ENCODE measurements at regions of chr5 and their contacts with region 1.

Region 1: DNA sequence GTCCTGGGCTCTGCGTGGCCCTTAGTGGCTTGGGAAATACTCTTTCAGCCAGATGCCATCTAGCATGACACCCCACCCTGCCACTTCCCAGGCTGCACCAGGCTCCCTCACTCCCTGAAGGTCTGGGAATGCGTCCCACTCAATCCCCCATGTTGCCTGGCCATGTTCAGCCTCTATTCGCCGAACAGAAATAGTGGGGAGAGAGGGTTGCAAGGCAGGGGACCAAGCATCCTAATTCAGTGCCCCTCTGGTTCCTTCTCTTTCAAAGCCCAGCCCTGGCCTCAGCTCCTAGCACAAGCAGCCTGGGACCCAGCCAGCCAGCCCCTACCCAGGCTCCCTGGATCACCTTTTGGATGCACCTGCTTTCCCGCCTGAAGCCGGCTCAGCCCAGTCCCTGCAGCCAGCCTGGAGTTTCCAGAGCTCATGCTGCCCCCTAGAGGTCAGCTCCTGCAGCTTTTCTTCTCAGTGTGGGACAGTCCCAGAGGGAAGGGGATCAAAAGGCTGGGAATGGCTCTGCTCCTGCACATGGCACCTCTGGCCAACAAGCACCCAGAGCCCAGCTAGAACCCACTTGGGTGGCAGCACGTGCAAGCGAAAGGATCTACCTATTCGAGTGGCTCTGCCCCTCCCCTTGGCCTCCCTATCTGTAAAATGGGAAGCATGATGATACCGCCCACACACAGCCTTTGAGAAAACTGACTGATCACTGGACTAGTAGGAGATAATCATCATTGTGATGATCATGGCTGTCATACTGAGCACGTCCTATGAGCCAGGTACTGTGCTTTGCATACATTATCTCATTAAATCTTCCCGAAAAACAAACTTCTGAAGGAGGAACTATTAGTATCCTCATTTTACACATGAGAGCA is 48.7 kb upstream of the C5orf58 start:
- H3K4me3 ChIP-seq: no peak overlapping the region
- H3K27ac ChIP-seq: no peak overlapping the region
- H3K4me1 ChIP-seq: no peaks in the 10 kb centered on the region
- CTCF ChIP-seq: peak; percentile 39

Region 2: GRCh38 chr5:170100066-170100943 is 83.7 kb before region 1 on chr5:
- CTCF ChIA-PET with region 1: interaction called, 169 read pairs
- POLR2A ChIA-PET with region 1: no interaction called
- H3K4me3 ChIP-seq: no peak overlapping the region
- H3K27ac ChIP-seq: no peak overlapping the region
- H3K4me1 ChIP-seq: no peaks in the 10 kb centered on the region
- CTCF ChIP-seq: peak; percentile 62

Region 3: DNA sequence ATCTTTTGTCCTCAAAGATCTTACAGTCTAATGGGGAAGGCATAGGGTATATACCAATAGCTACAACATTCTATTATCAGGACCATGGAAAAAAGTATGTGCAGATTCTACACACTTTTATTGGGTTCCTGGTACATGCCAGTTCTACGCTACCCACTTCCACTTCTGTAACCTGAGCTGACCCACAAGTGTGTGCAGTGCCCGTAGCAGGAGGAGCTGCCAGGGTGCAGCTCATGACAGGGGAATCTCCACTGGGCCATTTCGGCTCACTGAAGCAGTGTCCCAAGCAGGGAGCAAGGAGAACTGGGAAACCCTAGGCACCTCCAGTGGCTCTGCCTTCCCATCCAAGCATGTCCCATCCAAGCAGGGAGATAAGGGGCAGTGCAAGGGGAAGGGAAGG is 18.0 kb before region 1 on chr5:
- CTCF ChIA-PET with region 1: interaction called, 12 read pairs
- POLR2A ChIA-PET with region 1: no interaction called
- H3K4me3 ChIP-seq: no peak overlapping the region
- H3K27ac ChIP-seq: no peak overlapping the region
- H3K4me1 ChIP-seq: no peaks in the 10 kb centered on the region
- CTCF ChIP-seq: no peak

Region 4: DNA sequence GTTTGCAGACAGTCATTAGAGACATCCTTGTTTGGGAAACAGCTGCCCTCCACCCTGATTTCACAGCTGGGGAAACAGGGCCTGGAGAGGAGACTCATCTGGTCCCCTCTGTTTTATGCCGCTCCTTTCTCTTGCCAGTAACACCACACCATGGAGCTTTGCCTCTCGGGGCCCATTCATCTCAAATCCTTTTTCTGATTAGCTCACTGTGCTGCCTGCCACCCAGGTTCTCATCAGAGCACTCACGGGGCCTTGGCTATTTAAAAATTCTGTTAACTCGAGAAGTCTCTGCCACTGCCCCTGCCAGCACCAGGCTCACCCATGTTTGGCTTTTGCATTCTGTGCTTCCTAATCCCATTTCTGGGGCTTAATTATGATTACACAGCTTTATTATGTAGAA is 11.9 kb after region 1 on chr5:
- CTCF ChIA-PET with region 1: interaction called, 27 read pairs
- POLR2A ChIA-PET with region 1: no interaction called
- H3K4me3 ChIP-seq: no peak overlapping the region
- H3K27ac ChIP-seq: no peak overlapping the region
- H3K4me1 ChIP-seq: no peaks in the 10 kb centered on the region
- CTCF ChIP-seq: no peak

Region 5: GRCh38 chr5:170206216-170206615 is 22.2 kb after region 1 on chr5:
- CTCF ChIA-PET with region 1: interaction called, 10 read pairs
- POLR2A ChIA-PET with region 1: no interaction called
- H3K4me3 ChIP-seq: no peak overlapping the region
- H3K27ac ChIP-seq: no peak overlapping the region
- H3K4me1 ChIP-seq: no peaks in the 10 kb centered on the region
- CTCF ChIP-seq: no peak

Region 6: GRCh38 chr5:170216266-170216864 is 32.3 kb after region 1 on chr5:
- CTCF ChIA-PET with region 1: interaction called, 18 read pairs
- POLR2A ChIA-PET with region 1: no interaction called
- H3K4me3 ChIP-seq: no peak overlapping the region
- H3K27ac ChIP-seq: no peak overlapping the region
- H3K4me1 ChIP-seq: no peaks in the 10 kb centered on the region; the same call in 1 of the 2 replicates
- CTCF ChIP-seq: peak; percentile 82